ENCODE measurements at regions of chr21 and their contacts with region 1.

Region 1: DNA sequence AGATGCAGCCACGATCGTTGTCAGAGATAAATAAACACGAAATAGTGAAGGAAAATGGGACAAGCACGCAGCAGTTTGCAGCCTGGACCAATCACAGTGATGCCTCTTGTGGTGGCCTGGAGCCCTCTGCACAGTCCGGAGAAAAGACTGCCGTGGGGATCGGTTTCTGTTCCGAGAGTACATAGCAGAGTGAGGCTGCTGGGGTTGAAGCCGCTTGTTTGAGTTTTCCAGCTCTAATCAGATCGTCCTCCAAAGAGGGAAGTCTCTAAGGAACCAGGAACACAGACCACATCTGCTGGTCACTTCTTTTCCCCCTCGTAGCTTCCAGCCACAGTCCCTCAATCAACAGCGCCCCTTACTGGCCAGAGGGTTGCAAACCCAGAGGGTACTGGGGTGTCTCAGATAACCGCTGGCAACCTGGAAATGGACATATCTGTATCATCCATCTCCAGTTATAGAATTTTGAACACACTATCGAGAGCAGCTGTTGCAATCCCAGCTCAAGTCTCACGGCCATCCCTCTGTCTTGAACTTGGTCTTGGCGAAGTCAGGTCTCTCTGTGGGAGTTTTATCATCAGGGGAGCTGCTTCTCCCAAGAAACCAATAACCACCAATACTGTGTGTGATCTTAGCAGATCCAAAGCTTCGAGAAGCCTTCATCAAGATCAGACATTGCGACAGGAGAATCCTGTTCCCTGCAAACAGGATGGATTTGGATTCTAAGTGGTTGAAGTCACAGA is 57.4 kb downstream of the OLIG1 start:
- DNase-seq: peak; percentile 42 to 97 (median 84)

Region 2: GRCh38 chr21:32940079-32941014 is 187.0 kb before region 1 on chr21:
- intact Hi-C with region 1: loop called (anchors 2 kb)
- DNase-seq: peak in 3 of 10 donors; percentile 42 to 64 (median 46)

Region 3: DNA sequence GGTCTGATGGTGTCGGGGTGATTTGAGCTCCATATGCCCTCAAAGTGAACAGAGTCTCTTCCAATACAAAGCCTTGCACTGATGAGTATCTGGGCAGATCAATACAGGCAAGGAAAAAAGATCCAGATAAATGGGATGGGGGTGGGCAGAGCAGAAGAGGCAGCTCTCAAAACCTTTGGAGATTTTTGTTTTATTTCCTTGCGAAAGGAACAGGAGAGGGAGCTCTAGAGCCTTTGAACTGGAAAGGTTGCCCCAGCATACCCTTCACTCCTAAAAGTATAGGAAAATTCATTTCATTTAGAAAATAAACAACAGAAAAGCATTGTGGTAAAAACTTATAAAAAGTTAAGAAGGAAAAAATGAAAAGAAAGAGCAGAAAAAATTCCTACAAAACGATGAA is 133.0 kb before region 1 on chr21:
- intact Hi-C with region 1: loop called (anchors 1 kb)
- DNase-seq: no peak

Measured in posterior cingulate gyrus (tissue), 11 donors.